K562 (cell line): ENCODE measurements at regions of chr7 and their contacts with region 1.

Region 1: DNA sequence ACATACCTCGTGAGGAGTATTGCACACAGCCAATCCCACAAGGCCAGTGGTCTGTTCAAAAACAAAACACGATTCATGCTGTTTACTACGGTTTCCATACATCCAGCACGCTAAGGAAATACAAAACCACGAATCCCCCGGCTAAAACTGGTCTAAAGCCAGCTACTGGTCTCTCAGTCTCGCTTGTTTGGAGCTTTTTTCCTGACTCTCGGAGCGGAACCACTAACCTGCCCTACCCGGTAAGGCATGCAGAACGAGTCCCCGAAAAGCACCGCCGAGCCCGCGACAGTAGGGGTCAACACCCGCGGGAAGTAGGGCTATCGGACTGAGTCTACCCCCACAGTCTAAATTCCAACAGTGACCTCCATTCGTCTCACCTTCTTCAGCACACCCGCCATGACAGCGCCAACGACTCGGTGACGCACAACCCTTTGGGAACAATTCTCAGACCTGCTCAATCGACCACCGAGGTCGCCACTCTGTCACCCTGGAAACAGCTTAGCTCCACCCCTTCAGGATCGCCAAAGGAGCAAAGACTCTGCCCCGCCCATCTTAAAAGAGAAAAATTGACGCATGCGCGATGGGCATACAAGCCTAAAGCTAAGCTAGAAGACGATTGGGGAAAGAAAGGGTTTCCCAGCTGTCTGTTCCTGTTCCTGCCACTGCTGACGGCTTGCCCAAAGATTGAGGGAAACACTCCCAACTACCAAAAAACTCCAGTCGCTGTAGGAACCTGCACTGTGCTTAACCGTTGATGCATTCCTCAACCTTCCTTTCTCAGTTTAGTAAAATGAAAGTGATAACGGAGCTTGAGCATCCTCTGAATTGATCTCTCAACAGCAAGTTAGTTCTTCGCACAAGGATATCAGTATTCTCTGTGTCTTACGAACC is at the start of gene NDUFA5:
- DNase-seq: peak; percentile 97 to 100 (median 98)
- ATAC-seq: peak; percentile 91
- H3K4me3 ChIP-seq: peak within 1 kb of the TSS; percentile 63
- H3K27ac ChIP-seq: peak within 1 kb of the TSS; percentile 95
- H3K4me1 ChIP-seq: peaks cover 13 to 27% of the 10 kb centered on the region in 2 experiments
- H3K27me3 ChIP-seq: no peaks in the 10 kb centered on the region
- CTCF ChIP-seq: peak in 1 of 3 experiments; percentile 32; a peak in 2 of 6 replicates
- EP300 ChIP-seq: no peak
- POLR2A ChIP-seq: peak; percentile 96
- RAD21 ChIP-seq: no peak
- polyA plus RNA-seq, gene NDUFA5: 669 to 677 TPM

Region 2: DNA sequence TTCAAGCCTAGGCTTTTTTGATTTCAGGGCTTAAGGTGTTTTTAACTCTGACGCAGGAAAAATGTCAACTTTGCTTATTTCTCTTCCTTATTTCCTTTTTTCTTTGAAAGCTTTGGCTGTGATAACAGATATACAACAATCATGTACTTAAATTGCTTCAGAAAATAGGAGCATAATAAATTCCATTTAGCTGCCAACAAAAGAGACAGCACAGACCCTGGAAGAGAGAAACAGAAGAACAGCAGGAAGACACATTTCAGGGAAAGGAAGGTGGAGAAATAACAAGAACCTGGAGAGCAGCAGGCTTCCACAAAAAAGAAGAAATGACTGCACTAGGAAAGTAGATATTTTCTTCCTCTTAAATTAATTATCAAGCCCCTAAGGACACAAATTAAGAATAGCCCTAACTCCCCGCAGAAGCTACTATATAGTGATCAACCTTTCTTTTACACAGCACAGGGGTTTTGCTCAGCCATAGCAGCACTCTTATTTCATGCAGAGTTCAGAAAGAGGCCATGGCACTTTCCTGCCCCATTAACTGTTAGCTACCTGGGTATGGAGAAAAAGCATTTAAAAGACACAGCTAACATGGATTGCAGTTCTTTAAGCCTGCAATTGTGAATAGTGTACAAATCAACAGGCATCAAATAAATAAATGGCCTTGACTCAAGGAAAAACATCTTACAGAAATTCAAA is 84.7 kb before region 1 on chr7:
- CTCF ChIA-PET with region 1: no interaction called
- POLR2A ChIA-PET with region 1: no interaction called
- in situ Hi-C with region 1: no loop called
- intact Hi-C with region 1: no loop called
- DNase-seq: no peak
- ATAC-seq: no peak; the same call in 2 of the 3 replicates
- H3K4me3 ChIP-seq: no peak overlapping the region
- H3K27ac ChIP-seq: no peak overlapping the region
- H3K4me1 ChIP-seq: no peaks in the 10 kb centered on the region; a peak in 1 of 5 replicates
- H3K27me3 ChIP-seq: no peaks in the 10 kb centered on the region
- CTCF ChIP-seq: no peak
- EP300 ChIP-seq: no peak
- POLR2A ChIP-seq: no peak
- RAD21 ChIP-seq: no peak

Region 3: DNA sequence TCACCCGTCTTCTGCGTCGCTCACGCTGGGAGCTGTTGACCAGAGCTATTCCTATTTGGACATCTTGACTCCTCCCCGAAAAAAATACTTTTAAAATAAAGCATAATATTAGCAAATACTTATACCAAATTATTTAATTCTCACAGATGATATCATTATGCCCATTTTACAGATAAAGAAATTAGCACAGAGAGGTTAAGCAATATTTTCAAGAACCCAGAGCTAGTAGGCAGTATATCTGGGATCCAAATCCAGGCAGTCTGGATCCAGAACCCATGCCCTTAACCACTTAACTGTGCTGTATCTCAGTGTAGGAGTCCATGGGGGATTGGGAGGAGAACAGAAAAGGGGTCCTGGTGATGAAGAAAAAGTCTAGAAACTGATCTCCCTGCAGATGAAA is 29.4 kb before region 1 on chr7:
- CTCF ChIA-PET with region 1: no interaction called
- POLR2A ChIA-PET with region 1: interaction called, 11 read pairs
- in situ Hi-C with region 1: no loop called
- intact Hi-C with region 1: no loop called
- DNase-seq: peak; percentile 14 to 44 (median 34)
- ATAC-seq: peak; percentile 19
- H3K4me3 ChIP-seq: peak overlapping the region; percentile 11
- H3K27ac ChIP-seq: peak overlapping the region; percentile 67
- H3K4me1 ChIP-seq: peaks cover 6 to 13% of the 10 kb centered on the region in 2 experiments; a peak in 4 of 5 replicates
- H3K27me3 ChIP-seq: no peaks in the 10 kb centered on the region
- CTCF ChIP-seq: no peak
- EP300 ChIP-seq: no peak
- POLR2A ChIP-seq: no peak
- RAD21 ChIP-seq: no peak

Region 4: GRCh38 chr7:123534383-123535260 is 23.0 kb before region 1 on chr7 and contains the start of gene IQUB:
- CTCF ChIA-PET with region 1: no interaction called
- POLR2A ChIA-PET with region 1: interaction called, 13 read pairs
- in situ Hi-C with region 1: no loop called
- intact Hi-C with region 1: loop called (anchors 2 kb)
- DNase-seq: peak; percentile 99
- ATAC-seq: peak; percentile 76
- H3K4me3 ChIP-seq: peak within 1 kb of the TSS; percentile 69
- H3K27ac ChIP-seq: peak within 1 kb of the TSS; percentile 86
- H3K4me1 ChIP-seq: peaks cover 9 to 19% of the 10 kb centered on the region in 2 experiments
- H3K27me3 ChIP-seq: no peaks in the 10 kb centered on the region
- CTCF ChIP-seq: no peak
- EP300 ChIP-seq: no peak
- POLR2A ChIP-seq: peak; percentile 93
- RAD21 ChIP-seq: no peak
- polyA plus RNA-seq, gene IQUB: 1.3 to 1.7 TPM

Region 5: GRCh38 chr7:123570401-123571182 is 12.9 kb after region 1 on chr7:
- CTCF ChIA-PET with region 1: no interaction called
- POLR2A ChIA-PET with region 1: interaction called, 12 read pairs
- in situ Hi-C with region 1: no loop called
- intact Hi-C with region 1: no loop called
- DNase-seq: peak in 1 of 4 experiments; percentile 39
- ATAC-seq: peak; percentile 55
- H3K4me3 ChIP-seq: no peak overlapping the region
- H3K27ac ChIP-seq: no peak overlapping the region
- H3K4me1 ChIP-seq: peaks cover 0 to 7% of the 10 kb centered on the region in 2 experiments; a peak in 4 of 5 replicates
- H3K27me3 ChIP-seq: no peaks in the 10 kb centered on the region
- CTCF ChIP-seq: no peak
- EP300 ChIP-seq: no peak
- POLR2A ChIP-seq: no peak
- RAD21 ChIP-seq: no peak